Adrenal gland (tissue), 19 donors: ENCODE measurements at regions of chr2 and their contacts with region 1.

Region 1: DNA sequence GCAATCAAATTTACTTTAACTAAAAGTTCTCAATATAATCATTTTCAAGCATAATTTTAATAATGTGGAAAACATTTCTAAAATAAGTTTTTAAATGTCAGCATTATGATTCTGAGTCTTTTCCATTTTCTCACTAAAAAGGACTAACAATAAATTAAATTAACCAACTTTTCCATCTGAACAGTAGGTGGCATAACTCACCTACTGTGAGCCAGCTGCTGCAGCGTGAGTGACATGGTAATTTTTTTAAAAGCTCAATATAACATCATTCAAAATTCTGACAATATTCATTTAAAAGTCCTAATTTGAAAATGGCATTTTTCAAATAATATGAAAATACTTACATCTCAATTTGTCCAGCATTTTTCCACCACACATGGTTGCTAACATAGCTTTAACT is 66.5 kb downstream of the DTNB start:
- DNase-seq: no peak
- H3K4me3 ChIP-seq: no peak overlapping the region
- H3K27ac ChIP-seq: no peak overlapping the region
- H3K4me1 ChIP-seq: no peaks in the 10 kb centered on the region
- H3K27me3 ChIP-seq: no peaks in the 10 kb centered on the region
- CTCF ChIP-seq: peak in 5 of 6 experiments; percentile 51 to 70 (median 65)
- POLR2A ChIP-seq: no peak

Region 2: GRCh38 chr2:25664183-25664964 is 57.5 kb after region 1 on chr2:
- intact Hi-C with region 1: loop called in 1 of 2 experiments (anchors 10 kb)
- DNase-seq: peak; percentile 56 to 79 (median 67)
- H3K4me3 ChIP-seq: no peak overlapping the region
- H3K27ac ChIP-seq: no peak overlapping the region
- H3K4me1 ChIP-seq: peaks cover 0 to 5% of the 10 kb centered on the region in 2 donors
- H3K27me3 ChIP-seq: no peaks in the 10 kb centered on the region
- CTCF ChIP-seq: peak; percentile 38 to 72 (median 65)
- POLR2A ChIP-seq: no peak

Region 3: GRCh38 chr2:25673300-25674076 is 66.6 kb after region 1 on chr2 and contains the start of gene DTNB:
- intact Hi-C with region 1: loop called (anchors 10 kb)
- DNase-seq: peak; percentile 83 to 90 (median 87)
- H3K4me3 ChIP-seq: peak within 1 kb of the TSS; percentile 8 to 87 (median 60)
- H3K27ac ChIP-seq: peak within 1 kb of the TSS; percentile 21 to 94 (median 72)
- H3K4me1 ChIP-seq: peaks cover 0 to 12% of the 10 kb centered on the region in 2 donors
- H3K27me3 ChIP-seq: no peaks in the 10 kb centered on the region
- CTCF ChIP-seq: no peak
- POLR2A ChIP-seq: peak; percentile 46 to 47
- total RNA-seq, gene DTNB: 6.4 to 26.1 (median 8.8) TPM